Ascending aorta (tissue), 2 donors: ENCODE measurements at regions of chr12 and their contacts with region 1.

Region 1: DNA sequence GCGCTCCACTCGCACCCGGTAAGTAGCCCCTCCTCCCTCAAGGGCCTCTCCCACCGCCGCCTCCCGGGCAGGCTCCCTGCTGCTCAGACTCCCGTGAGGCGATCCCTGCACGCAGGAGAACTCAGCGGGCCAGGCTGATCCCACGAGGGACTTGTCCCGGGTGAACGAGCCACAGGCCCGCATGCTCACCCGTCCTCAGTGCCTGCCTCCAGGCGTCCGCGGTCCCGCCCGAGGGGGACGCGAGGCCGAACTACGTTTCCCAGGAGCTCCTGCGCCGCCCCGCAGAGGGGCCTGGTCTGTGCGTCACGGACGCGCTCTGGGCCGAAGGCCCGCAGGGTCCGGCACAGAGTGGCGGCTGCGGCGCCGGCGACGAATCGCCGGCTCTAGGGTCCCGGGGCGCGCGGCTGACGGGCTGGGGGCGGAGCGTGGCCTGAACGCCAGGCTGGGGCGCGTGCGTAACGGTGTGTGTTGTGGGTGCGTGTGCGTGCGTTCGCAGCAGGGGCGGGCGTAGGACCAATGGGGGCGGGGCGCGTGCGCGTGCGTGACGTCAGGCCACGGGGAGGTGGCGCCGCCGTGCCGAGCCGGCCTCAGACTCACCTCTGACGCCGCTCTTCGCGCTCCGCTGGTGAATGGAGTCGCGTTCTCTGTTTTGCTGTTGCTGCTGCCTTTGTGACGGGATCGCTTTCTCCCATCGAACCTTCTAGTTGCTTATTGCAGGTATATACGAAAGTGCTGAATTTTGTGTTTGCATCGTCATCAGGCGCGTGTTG is at the starts of genes ZNF10 and ZNF891:
- DNase-seq: peak; percentile 78 to 97
- H3K4me3 ChIP-seq: peak within 1 kb of the TSS; percentile 90 to 94
- H3K27ac ChIP-seq: peak within 1 kb of the TSS; percentile 89 to 93
- H3K4me1 ChIP-seq: peaks cover 0 to 7% of the 10 kb centered on the region in 2 donors
- H3K27me3 ChIP-seq: no peaks in the 10 kb centered on the region
- CTCF ChIP-seq: peak in 1 of 3 experiments; percentile 3
- total RNA-seq, gene ZNF10: 3.8 TPM
- total RNA-seq, gene ZNF891: 2.0 TPM

Region 2: DNA sequence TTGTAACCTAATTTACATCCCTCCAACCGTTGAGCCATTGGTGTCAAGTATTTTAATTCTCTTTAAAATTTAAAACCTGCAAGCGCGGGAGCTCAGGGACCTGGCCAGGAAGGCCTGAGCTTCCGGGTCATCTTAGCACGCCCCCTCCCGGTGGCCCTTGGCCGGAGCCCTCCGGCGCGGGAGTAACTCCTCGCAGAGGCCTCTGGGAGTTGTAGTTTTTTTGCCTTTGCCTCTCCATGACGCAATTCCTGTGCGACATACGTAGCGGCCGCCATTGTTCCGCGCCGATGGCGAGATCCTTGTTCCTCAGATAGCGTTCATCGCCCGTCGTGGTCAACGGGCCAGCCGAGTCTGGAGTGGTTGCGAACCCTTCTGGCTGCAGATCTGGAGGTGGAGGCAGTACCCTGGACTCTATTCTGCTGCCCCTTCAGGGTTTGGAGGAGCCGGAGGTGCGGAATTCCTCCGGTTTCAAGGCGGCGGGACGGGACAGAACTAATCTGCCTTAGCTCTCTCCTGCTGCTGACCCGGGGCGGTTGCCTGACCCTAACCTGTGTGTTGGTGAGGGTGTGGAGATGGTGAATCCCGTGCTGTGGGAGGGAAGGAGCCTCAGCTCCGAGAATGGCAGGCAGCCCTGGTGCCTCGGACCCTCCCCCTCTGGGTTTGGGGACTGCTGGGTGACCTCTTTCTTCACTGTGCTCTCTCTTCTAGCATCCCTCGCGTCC is 51.2 kb after region 1 on chr12 and contains the start of gene ZNF268:
- intact Hi-C with region 1: loop called (anchors 1 kb)
- DNase-seq: peak; percentile 19 to 93
- H3K4me3 ChIP-seq: peak within 1 kb of the TSS; percentile 86
- H3K27ac ChIP-seq: peak within 1 kb of the TSS; percentile 46 to 72
- H3K4me1 ChIP-seq: no peaks in the 10 kb centered on the region
- H3K27me3 ChIP-seq: no peaks in the 10 kb centered on the region
- CTCF ChIP-seq: peak; percentile 49 to 76 (median 61)
- total RNA-seq, gene ZNF268: 38.5 TPM